ENCODE measurements at regions of chr13 and their contacts with region 1.

Region 1: GRCh38 chr13:19633479-19634255 is at the start of gene MPHOSPH8:
- DNase-seq: peak; percentile 98
- ATAC-seq: peak; percentile 97
- H3K4me3 ChIP-seq: peak within 1 kb of the TSS; percentile 73
- H3K27ac ChIP-seq: peak within 1 kb of the TSS; percentile 33
- H3K4me1 ChIP-seq: peaks cover 12% of the 10 kb centered on the region
- H3K27me3 ChIP-seq: no peaks in the 10 kb centered on the region
- CTCF ChIP-seq: no peak
- total RNA-seq, gene MPHOSPH8: 13.3 and 16.1 TPM in 2 replicates

Region 2: GRCh38 chr13:19882231-19882630 is 248.6 kb after region 1 on chr13:
- CTCF ChIA-PET with region 1: no interaction called
- POLR2A ChIA-PET with region 1: interaction called, 17 read pairs
- intact Hi-C with region 1: no loop called
- DNase-seq: no peak
- ATAC-seq: no peak
- H3K4me3 ChIP-seq: no peak overlapping the region
- H3K27ac ChIP-seq: no peak overlapping the region
- H3K4me1 ChIP-seq: no peaks in the 10 kb centered on the region
- H3K27me3 ChIP-seq: no peaks in the 10 kb centered on the region
- CTCF ChIP-seq: no peak